Heart right ventricle (tissue), 16 donors: ENCODE measurements at regions of chr4 and their contacts with region 1.

Region 1: GRCh38 chr4:143346206-143346605 is 9.5 kb downstream of the GAB1 start:
- DNase-seq: no peak
- ATAC-seq: peak in 2 of 8 donors; percentile 18 to 51
- H3K4me3 ChIP-seq: peak overlapping the region in 9 of 10 donors; percentile 6 to 42 (median 34)
- H3K27ac ChIP-seq: peak overlapping the region in 5 of 10 donors; percentile 43 to 81 (median 64)
- H3K4me1 ChIP-seq: peaks cover 2 to 59% (median 33%) of the 10 kb centered on the region in 9 donors
- H3K27me3 ChIP-seq: no peaks in the 10 kb centered on the region
- CTCF ChIP-seq: no peak

Region 2: DNA sequence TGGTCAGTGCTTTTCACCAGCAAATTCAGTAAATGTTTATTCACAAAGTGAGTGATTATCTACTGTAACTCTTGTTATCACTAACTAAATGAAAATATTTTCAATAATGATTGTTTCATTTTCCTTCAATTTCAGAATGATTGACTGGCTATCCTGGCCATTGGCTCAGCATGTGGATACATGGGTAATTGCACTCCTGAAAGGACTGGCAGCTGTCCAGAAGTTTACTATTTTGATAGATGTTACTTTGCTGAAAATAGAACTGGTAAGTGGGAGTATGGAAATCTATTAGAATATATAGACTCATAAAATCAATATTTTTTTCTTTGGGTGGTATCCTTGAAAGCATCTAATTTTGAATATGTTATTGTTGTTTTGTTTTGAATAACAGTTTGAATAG is 150.6 kb before region 1 on chr4:
- intact Hi-C with region 1: no loop called
- DNase-seq: no peak
- ATAC-seq: peak in 1 of 8 donors; percentile 63
- H3K4me3 ChIP-seq: no peak overlapping the region
- H3K27ac ChIP-seq: no peak overlapping the region
- H3K4me1 ChIP-seq: peaks cover 0 to 41% (median 7%) of the 10 kb centered on the region in 9 donors
- H3K27me3 ChIP-seq: no peaks in the 10 kb centered on the region
- CTCF ChIP-seq: no peak

Region 3: DNA sequence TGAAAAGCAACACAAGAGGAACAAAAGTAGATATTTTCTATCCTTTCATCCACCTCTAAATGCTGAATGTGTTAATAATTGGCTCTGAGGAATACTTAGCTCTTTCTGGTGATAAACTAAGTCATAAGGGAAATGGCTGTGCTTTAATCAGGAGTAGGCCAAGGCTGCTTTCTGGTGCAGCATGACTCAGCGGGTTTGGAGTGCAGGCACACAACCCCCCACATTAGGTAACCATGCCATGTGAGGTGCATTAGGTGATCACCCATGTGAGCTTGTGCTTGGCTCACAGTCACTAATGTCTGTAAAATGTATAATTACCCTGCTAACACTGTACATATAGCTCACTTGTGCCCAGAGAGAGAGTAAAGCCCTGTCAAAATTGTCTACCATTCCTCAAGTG is 104.3 kb before region 1 on chr4:
- intact Hi-C with region 1: no loop called
- DNase-seq: no peak
- ATAC-seq: no peak
- H3K4me3 ChIP-seq: no peak overlapping the region
- H3K27ac ChIP-seq: no peak overlapping the region
- H3K4me1 ChIP-seq: peaks cover 0 to 17% (median 3%) of the 10 kb centered on the region in 9 donors
- H3K27me3 ChIP-seq: no peaks in the 10 kb centered on the region
- CTCF ChIP-seq: no peak

Region 4: GRCh38 chr4:143399113-143399949 is 53.1 kb after region 1 on chr4:
- intact Hi-C with region 1: loop called in 3 of 10 experiments (anchors 5 to 10 kb)
- DNase-seq: no peak
- ATAC-seq: no peak
- H3K4me3 ChIP-seq: no peak overlapping the region
- H3K27ac ChIP-seq: peak overlapping the region in 3 of 10 donors; percentile 10 to 32 (median 16)
- H3K4me1 ChIP-seq: peaks cover 10 to 95% (median 79%) of the 10 kb centered on the region in 9 donors
- H3K27me3 ChIP-seq: no peaks in the 10 kb centered on the region
- CTCF ChIP-seq: peak; percentile 36 to 79 (median 67)

Region 5: GRCh38 chr4:143473334-143474126 is 127.3 kb after region 1 on chr4:
- intact Hi-C with region 1: loop called in 1 of 10 experiments (anchors 5 kb)
- DNase-seq: no peak
- ATAC-seq: no peak
- H3K4me3 ChIP-seq: no peak overlapping the region
- H3K27ac ChIP-seq: no peak overlapping the region
- H3K4me1 ChIP-seq: no peaks in the 10 kb centered on the region
- H3K27me3 ChIP-seq: no peaks in the 10 kb centered on the region
- CTCF ChIP-seq: no peak

Region 6: GRCh38 chr4:143489106-143489505 is 142.9 kb after region 1 on chr4:
- intact Hi-C with region 1: no loop called
- DNase-seq: no peak
- ATAC-seq: no peak
- H3K4me3 ChIP-seq: no peak overlapping the region
- H3K27ac ChIP-seq: no peak overlapping the region
- H3K4me1 ChIP-seq: no peaks in the 10 kb centered on the region
- H3K27me3 ChIP-seq: no peaks in the 10 kb centered on the region
- CTCF ChIP-seq: no peak

Region 7: GRCh38 chr4:143558823-143559756 is 212.9 kb after region 1 on chr4:
- intact Hi-C with region 1: no loop called
- DNase-seq: peak; percentile 62 to 69
- ATAC-seq: peak; percentile 89 to 94 (median 92)
- H3K4me3 ChIP-seq: peak overlapping the region; percentile 42 to 72 (median 62)
- H3K27ac ChIP-seq: peak overlapping the region in 9 of 10 donors; percentile 32 to 75 (median 59)
- H3K4me1 ChIP-seq: peaks cover 0 to 18% (median 4%) of the 10 kb centered on the region in 9 donors
- H3K27me3 ChIP-seq: peaks cover 0 to 3% (median 0%) of the 10 kb centered on the region in 7 donors
- CTCF ChIP-seq: peak in 8 of 9 donors; percentile 38 to 86 (median 62)